ENCODE measurements at regions of chr7 and their contacts with region 1.

Region 1: DNA sequence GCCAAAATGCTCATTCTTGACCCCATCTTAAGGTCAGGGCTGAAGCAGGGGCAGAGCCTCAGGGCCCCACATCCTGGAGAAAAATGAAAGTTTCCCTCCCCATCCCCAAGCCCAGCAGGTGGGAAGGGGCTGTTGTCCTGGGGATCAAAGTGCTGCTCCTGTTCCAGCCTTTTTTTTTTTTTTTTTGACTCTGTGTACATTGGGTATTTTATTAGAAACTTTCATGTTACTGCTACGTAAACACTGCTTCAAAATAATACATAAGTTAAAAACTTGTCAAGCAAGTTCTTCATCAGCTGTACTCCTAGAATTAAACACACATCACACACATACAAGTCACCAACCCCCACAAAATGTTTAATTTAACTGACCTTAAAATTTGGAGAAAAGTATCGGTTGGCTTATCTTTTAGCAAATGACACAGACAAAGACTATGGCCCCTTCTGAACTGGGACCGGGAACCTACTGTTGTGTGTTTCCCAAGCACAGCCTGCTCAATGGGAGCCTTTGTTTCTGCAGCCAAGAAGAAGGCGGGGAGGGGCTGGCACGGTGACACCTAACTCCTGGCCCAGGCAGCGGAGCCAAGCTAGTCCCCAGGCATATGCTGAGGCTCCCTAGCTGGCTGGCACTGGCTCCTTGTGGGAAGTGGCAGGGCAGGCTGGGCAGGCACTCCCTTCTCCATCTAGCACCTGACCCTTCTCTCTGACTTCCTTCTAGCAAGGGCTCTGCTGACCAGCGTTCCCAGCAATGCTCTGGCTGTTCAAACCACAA is 325.2 kb downstream of the PLXNA4 start:
- DNase-seq: peak; percentile 60 to 96 (median 76)

Region 2: DNA sequence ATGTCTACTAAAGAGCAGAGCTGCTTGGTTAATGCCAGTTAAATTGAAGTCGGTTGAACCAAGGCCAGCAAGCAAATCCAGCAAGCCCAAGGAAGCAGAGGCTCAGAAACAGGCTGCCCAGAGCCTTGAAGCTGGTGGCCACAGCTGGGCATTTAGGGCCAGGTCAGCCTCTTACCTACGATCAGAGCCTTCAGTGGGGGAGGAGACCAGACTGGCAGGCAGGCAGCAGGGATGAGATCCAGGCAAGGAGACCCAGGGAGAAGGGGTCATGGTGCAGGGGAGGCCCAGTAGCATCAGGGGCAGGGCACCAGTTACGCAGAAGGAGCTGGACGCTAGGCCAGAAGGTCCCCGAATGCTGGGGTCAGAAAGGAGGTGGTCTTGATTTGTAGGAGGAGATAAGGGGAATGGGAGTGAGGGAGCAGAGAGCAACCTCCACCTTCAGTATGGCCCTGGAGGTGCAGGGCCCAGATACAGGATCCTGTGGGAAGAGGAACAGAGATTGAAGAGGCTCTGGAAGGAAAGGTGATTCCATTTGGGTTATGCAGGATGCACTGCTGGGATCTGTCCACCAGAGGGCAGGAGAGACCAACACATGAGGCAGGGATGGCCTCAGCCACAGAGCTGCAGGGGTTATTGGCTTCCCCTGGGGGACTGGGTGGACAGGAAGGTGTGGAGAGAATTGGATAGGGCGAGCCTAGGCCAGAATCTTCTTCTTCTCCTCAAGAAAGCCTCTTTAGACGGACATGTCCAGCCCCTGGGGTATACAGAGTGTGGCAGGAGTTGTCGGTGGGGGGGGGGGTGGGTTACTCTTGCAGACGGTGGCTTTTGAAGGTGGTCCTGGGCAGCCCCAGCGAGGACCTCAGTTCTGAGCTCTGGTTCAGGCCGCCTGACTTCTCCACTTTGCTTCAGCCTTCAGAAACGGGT is 562.1 kb before region 1 on chr7:
- intact Hi-C with region 1: loop called (anchors 2 kb)
- DNase-seq: peak; percentile 50 to 93 (median 76)

Region 3: DNA sequence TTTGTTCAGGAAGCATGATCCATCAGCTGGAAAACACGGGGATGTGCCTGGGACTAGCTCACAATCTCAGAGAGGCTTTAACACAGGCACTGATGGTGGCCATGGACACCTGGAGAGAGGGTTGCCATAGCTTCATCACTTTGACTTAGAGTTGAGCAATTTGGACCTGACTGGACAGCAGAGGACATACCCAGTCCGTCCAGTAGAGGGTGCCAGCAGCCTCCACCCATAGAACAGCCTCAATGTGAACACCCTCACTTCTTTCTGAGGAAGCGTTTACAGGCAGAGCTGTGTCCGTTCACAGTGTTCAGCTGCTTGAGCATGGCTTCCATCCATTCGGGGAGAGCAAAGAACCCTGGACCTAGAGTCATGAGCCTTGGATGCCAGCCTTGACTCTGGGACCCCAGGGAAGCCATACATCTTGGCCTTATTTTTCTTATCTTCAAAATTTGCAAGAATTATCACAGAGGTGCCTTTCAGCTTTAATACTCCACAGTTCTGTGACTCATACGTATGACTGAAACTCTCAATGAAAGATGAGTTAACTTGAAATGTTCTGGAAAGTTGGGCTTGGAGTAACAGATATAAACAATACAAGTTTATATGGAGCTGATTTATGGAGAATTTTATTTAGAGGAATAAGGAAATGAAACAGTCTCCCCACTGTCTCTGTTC is 391.8 kb before region 1 on chr7:
- intact Hi-C with region 1: loop called (anchors 2 kb)
- DNase-seq: peak; percentile 47 to 95 (median 74)

Region 4: DNA sequence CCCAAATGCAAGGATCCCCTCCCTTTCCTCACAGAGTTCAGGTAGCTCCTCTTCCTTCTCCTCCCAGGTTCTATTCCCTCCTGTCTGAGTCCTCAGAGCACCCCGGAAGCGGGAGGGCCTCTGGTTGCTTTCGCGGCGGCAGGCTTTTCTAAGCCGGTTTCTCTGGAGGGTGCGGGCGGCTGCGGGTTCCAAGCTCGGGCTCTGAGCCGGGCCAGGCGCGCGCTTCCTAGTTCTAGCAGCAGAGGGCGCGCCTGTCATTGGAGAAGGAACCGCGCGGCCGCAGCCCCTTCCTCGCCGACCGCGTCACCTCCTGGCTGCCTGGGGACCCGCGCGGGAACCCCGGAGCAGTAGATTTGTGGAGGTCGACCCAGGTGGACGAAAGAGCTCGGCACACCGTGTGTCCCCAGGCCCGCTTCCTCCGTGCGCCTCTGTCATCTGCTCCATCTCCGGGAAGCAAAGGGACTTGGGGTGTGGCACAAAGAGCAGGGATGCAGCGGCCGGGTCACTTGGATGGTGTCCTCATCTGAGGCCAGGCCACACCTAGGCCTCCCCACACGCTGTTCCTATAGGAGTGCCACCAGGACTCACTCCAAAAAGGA is 305.7 kb before region 1 on chr7:
- intact Hi-C with region 1: loop called (anchors 1 kb)
- DNase-seq: peak; percentile 46 to 96 (median 70)

Region 5: GRCh38 chr7:132368246-132368900 is 117.3 kb after region 1 on chr7:
- intact Hi-C with region 1: no loop called
- DNase-seq: peak in 2 of 10 donors; percentile 20 to 76

Measured in posterior cingulate gyrus (tissue), 11 donors.